ENCODE measurements at regions of chr12 and their contacts with region 1.

Region 1: GRCh38 chr12:115623764-115624334 is 653.6 kb downstream of the MED13L start:
- DNase-seq: peak; percentile 81 to 88 (median 86)
- ATAC-seq: peak; percentile 87 to 97 (median 88)
- H3K4me3 ChIP-seq: no peak overlapping the region
- H3K27ac ChIP-seq: peak overlapping the region in 7 of 12 donors; percentile 24 to 70 (median 56)
- H3K4me1 ChIP-seq: peaks cover 0 to 11% (median 0%) of the 10 kb centered on the region in 12 donors
- H3K27me3 ChIP-seq: peaks cover 0 to 5% (median 0%) of the 10 kb centered on the region in 9 donors
- CTCF ChIP-seq: no peak
- POLR2A ChIP-seq: no peak

Region 2: DNA sequence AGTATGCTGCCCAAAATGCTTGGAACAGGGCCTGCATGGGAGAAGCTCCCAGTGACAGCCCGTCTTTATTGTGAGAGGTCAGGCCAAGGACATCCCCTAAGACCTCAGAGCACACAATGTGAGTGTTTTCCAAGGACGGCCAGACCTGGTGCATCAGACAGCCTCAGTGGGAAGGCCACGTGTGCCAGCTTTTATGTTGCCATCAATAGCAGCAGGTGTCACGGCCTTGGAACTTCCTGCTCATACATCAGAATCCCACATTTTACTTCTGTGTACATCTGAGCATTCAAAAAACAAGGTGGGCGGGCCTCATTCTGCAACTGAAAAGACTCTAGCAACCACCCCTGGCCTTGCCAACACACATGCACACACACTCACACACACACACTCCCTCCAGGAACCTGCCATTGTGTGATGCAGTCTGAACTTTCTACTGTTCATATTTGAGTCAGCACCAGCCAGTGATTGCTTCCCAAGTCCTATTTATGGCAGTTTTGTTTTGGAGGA is 186.7 kb before region 1 on chr12:
- intact Hi-C with region 1: loop called in 2 of 10 experiments (anchors 5 kb)
- DNase-seq: peak in 4 of 5 donors; percentile 34 to 74 (median 67)
- ATAC-seq: peak in 3 of 4 donors; percentile 53 to 69 (median 64)
- H3K4me3 ChIP-seq: no peak overlapping the region
- H3K27ac ChIP-seq: peak overlapping the region in 10 of 12 donors; percentile 0 to 69 (median 40)
- H3K4me1 ChIP-seq: peaks cover 0 to 31% (median 10%) of the 10 kb centered on the region in 12 donors
- H3K27me3 ChIP-seq: no peaks in the 10 kb centered on the region
- CTCF ChIP-seq: no peak
- POLR2A ChIP-seq: no peak

Region 3: DNA sequence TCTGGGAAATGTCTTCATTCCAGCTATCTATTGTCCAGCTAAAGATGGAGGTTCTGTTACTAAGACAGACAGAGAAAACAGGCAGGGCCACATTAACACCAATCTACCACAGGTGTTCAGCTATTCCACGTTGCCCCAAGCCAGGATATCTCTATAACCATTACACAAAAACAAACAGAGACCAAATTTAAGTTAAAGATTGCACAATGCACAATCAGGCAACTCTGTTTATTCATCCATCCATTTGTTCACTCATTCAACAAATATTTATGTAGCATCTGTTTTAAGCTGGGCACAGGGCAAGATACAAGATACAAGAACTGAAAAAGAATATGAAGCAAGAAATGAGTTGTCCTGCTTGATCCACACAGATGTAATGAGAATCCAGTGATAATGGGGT is 24.6 kb after region 1 on chr12:
- intact Hi-C with region 1: no loop called
- DNase-seq: no peak
- ATAC-seq: no peak
- H3K4me3 ChIP-seq: no peak overlapping the region
- H3K27ac ChIP-seq: no peak overlapping the region
- H3K4me1 ChIP-seq: no peaks in the 10 kb centered on the region
- H3K27me3 ChIP-seq: peaks cover 0 to 5% (median 0%) of the 10 kb centered on the region in 9 donors
- CTCF ChIP-seq: no peak
- POLR2A ChIP-seq: no peak

Measured in heart left ventricle (tissue), 16 donors.